Activated CD4-positive, alpha-beta memory T cell treated with anti-CD3 and anti-CD28 coated beads for 36 hours (primary cell): ENCODE measurements at regions of chr11 and their contacts with region 1.

Region 1: GRCh38 chr11:77820563-77821348 is at the starts of genes AAMDC and RSF1:
- DNase-seq: peak; percentile 98
- H3K4me3 Mint-ChIP-seq: peak within 1 kb of the TSS; percentile 97
- H3K27ac Mint-ChIP-seq: peak within 1 kb of the TSS; percentile 98
- H3K4me1 Mint-ChIP-seq: peaks cover 34% of the 10 kb centered on the region
- H3K27me3 Mint-ChIP-seq: no peaks in the 10 kb centered on the region
- total RNA-seq, gene AAMDC: 9.5 to 10.0 TPM
- total RNA-seq, gene RSF1: 48.7 to 52.9 TPM

Region 2: DNA sequence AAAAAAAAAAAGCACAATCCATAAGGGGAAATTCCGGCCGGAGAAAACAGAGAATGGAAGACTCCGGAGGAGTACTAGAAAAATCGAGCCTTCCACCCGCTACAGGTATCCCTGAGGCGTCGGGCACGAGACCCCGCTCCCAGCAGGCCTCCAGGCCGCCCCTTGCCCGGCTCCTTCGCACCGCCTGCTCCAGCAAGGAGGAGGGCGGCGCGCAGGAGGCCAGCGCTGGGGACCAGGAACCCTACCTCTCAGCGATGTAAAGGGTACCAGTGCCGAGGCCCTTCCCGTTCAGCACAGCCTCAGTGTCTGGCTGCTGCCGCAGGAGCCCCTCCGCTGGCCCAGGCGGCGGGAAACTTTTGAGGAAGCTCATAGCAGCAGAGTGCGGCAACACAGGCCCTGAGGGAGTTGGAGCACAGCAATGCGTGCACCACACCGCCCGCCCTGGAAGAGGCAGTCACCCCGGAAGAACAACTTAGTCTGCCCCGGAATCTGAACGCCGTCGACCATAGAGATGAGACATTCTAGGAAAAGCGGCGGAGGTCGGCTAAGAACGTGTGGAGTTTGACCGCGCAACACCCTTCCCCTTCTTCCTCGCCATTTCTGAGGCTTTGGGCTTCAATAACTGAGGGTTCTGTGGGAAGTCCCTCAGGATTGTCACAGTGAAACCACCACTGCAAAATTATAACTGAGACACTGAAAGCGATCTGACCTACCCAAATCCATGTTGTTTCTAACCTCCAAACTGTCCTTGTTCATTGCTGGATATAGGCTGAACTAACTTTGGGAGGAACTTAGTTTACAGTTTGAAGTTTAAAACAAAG is 183.2 kb before region 1 on chr11 and contains the start of gene CLNS1A:
- CTCF ChIA-PET with region 1: no interaction called
- POLR2A ChIA-PET with region 1: no interaction called
- intact Hi-C with region 1: loop called (anchors 1 kb)
- DNase-seq: peak; percentile 90
- H3K4me3 Mint-ChIP-seq: peak within 1 kb of the TSS; percentile 95
- H3K27ac Mint-ChIP-seq: peak within 1 kb of the TSS; percentile 95
- H3K4me1 Mint-ChIP-seq: peaks cover 35% of the 10 kb centered on the region
- H3K27me3 Mint-ChIP-seq: no peaks in the 10 kb centered on the region
- total RNA-seq, gene CLNS1A: 199 to 200 TPM

Region 3: GRCh38 chr11:77705195-77705876 is 115.4 kb before region 1 on chr11:
- CTCF ChIA-PET with region 1: interaction called, 3 read pairs
- POLR2A ChIA-PET with region 1: no interaction called
- intact Hi-C with region 1: loop called (anchors 2 kb)
- DNase-seq: peak; percentile 46
- H3K4me3 Mint-ChIP-seq: no peak overlapping the region
- H3K27ac Mint-ChIP-seq: peak overlapping the region; percentile 71
- H3K4me1 Mint-ChIP-seq: peaks cover 32% of the 10 kb centered on the region
- H3K27me3 Mint-ChIP-seq: no peaks in the 10 kb centered on the region

Region 4: DNA sequence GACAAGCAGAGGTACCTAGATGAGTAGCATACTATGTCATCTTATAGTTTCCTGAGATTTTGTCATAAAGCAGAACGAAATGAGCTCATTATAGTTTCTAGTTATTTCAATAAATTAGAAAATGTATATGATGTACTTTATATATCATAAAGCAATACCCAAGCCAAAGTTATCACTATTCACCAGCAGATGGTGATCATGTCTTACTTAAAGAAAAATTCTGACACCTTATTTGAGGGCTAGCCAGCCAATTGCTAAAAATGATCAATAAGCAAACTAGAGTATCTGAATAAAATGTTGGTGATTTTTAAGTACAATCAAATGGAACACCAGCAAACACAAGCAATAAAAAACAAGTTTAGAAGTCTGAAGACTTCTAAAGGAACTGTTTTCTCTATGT is 44.3 kb before region 1 on chr11:
- CTCF ChIA-PET with region 1: interaction called, 3 read pairs
- POLR2A ChIA-PET with region 1: no interaction called
- intact Hi-C with region 1: loop called (anchors 5 kb)
- DNase-seq: no peak
- H3K4me3 Mint-ChIP-seq: no peak overlapping the region
- H3K27ac Mint-ChIP-seq: no peak overlapping the region
- H3K4me1 Mint-ChIP-seq: peaks cover 46% of the 10 kb centered on the region
- H3K27me3 Mint-ChIP-seq: no peaks in the 10 kb centered on the region

Region 5: GRCh38 chr11:77879218-77879617 is 58.5 kb after region 1 on chr11:
- CTCF ChIA-PET with region 1: no interaction called
- POLR2A ChIA-PET with region 1: no interaction called
- intact Hi-C with region 1: no loop called
- DNase-seq: no peak
- H3K4me3 Mint-ChIP-seq: no peak overlapping the region
- H3K27ac Mint-ChIP-seq: no peak overlapping the region
- H3K4me1 Mint-ChIP-seq: no peaks in the 10 kb centered on the region
- H3K27me3 Mint-ChIP-seq: no peaks in the 10 kb centered on the region

Region 6: DNA sequence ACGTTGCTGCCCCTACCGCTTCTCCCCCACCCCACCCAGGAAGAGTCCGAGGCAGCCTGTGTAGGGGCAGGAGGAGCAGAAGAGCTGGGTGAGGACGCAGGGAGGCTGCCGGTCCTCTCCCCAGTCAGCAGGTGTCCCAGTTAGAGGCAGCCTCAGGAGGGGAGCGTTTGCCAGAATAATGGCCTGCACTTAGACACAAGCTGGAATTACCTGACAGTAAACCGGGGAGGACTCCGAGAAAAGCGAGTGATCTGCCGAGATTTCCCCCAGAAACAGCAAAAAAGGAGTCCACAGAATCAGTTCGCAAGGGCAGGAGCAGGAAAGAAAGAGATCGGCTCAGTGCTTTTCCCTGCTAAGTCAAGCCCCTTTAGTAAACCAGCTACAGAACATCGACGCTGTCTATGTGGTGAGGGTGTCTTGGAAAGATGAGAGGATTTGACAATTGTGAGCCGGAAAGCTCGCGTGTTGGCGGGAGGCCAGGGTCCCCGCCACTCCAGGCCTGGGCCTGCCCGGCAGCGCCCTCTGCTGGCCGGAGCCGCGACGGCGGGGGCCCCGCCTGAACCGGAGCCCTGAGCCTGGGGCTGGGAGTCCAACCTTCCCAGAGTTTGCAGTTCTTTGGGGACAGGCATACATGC is 225.2 kb after region 1 on chr11:
- CTCF ChIA-PET with region 1: interaction called, 4 read pairs
- POLR2A ChIA-PET with region 1: no interaction called
- intact Hi-C with region 1: loop called (anchors 1 kb)
- DNase-seq: peak; percentile 82
- H3K4me3 Mint-ChIP-seq: peak overlapping the region; percentile 26
- H3K27ac Mint-ChIP-seq: no peak overlapping the region
- H3K4me1 Mint-ChIP-seq: peaks cover 12% of the 10 kb centered on the region
- H3K27me3 Mint-ChIP-seq: no peaks in the 10 kb centered on the region